Activated CD4-positive, alpha-beta T cell treated with anti-CD3 and anti-CD28 coated beads, Interleukin-2, amount 10 ng/mL, durations not matched to agents 24 days and 14 days (primary cell): ENCODE measurements at regions of chr19 and their contacts with region 1.

Region 1: GRCh38 chr19:18521885-18522624 is at the start of gene ELL:
- DNase-seq: peak; percentile 100
- H3K4me3 Mint-ChIP-seq: peak within 1 kb of the TSS; percentile 91
- H3K27ac Mint-ChIP-seq: peak within 1 kb of the TSS; percentile 88
- H3K4me1 Mint-ChIP-seq: peaks cover 14% of the 10 kb centered on the region
- H3K27me3 Mint-ChIP-seq: peaks cover 1% of the 10 kb centered on the region
- total RNA-seq, gene ELL: 25.5 and 27.8 TPM in 2 replicates

Region 2: GRCh38 chr19:18478569-18479311 is 43.3 kb before region 1 on chr19:
- intact Hi-C with region 1: loop called (anchors 1 kb)
- DNase-seq: peak; percentile 84
- H3K4me3 Mint-ChIP-seq: peak overlapping the region; percentile 82
- H3K27ac Mint-ChIP-seq: peak overlapping the region; percentile 96
- H3K4me1 Mint-ChIP-seq: peaks cover 61% of the 10 kb centered on the region
- H3K27me3 Mint-ChIP-seq: no peaks in the 10 kb centered on the region

Region 3: GRCh38 chr19:18543816-18544475 is 21.9 kb after region 1 on chr19:
- intact Hi-C with region 1: loop called (anchors 1 kb)
- DNase-seq: peak; percentile 96
- H3K4me3 Mint-ChIP-seq: peak overlapping the region; percentile 99
- H3K27ac Mint-ChIP-seq: peak overlapping the region; percentile 99
- H3K4me1 Mint-ChIP-seq: peaks cover 22% of the 10 kb centered on the region
- H3K27me3 Mint-ChIP-seq: no peaks in the 10 kb centered on the region

Region 4: GRCh38 chr19:18571564-18572300 is 49.7 kb after region 1 on chr19 and contains the start of gene UBA52:
- intact Hi-C with region 1: loop called (anchors 1 kb)
- DNase-seq: peak; percentile 100
- H3K4me3 Mint-ChIP-seq: peak within 1 kb of the TSS; percentile 99
- H3K27ac Mint-ChIP-seq: peak within 1 kb of the TSS; percentile 95
- H3K4me1 Mint-ChIP-seq: peaks cover 24% of the 10 kb centered on the region
- H3K27me3 Mint-ChIP-seq: no peaks in the 10 kb centered on the region
- total RNA-seq, gene UBA52: 1,581 and 1,604 TPM in 2 replicates

Region 5: GRCh38 chr19:18636183-18636968 is 114.3 kb after region 1 on chr19:
- intact Hi-C with region 1: loop called (anchors 1 kb)
- DNase-seq: peak; percentile 100
- H3K4me3 Mint-ChIP-seq: peak overlapping the region; percentile 99
- H3K27ac Mint-ChIP-seq: peak overlapping the region; percentile 93
- H3K4me1 Mint-ChIP-seq: peaks cover 22% of the 10 kb centered on the region
- H3K27me3 Mint-ChIP-seq: peaks cover 9% of the 10 kb centered on the region